Motor neuron (in vitro differentiated cells): ENCODE measurements at regions of chr6 and their contacts with region 1.

Region 1: GRCh38 chr6:129598244-129599187 is 111.5 kb downstream of the ARHGAP18 start:
- ATAC-seq: peak; percentile 64 to 87 (median 68)
- H3K4me3 ChIP-seq: no peak overlapping the region
- H3K27ac ChIP-seq: no peak overlapping the region
- H3K4me1 ChIP-seq: peaks cover 4% of the 10 kb centered on the region in 2 donors

Region 2: GRCh38 chr6:129661536-129662405 is 63.3 kb after region 1 on chr6:
- in situ Hi-C with region 1: loop called in 1 of 9 experiments (anchors 10 kb)
- ATAC-seq: peak in 7 of 8 experiments; percentile 36 to 87 (median 54)
- H3K4me3 ChIP-seq: no peak overlapping the region
- H3K27ac ChIP-seq: peak overlapping the region in 1 of 2 donors; percentile 36
- H3K4me1 ChIP-seq: peaks cover 20 to 26% of the 10 kb centered on the region in 2 donors

Region 3: DNA sequence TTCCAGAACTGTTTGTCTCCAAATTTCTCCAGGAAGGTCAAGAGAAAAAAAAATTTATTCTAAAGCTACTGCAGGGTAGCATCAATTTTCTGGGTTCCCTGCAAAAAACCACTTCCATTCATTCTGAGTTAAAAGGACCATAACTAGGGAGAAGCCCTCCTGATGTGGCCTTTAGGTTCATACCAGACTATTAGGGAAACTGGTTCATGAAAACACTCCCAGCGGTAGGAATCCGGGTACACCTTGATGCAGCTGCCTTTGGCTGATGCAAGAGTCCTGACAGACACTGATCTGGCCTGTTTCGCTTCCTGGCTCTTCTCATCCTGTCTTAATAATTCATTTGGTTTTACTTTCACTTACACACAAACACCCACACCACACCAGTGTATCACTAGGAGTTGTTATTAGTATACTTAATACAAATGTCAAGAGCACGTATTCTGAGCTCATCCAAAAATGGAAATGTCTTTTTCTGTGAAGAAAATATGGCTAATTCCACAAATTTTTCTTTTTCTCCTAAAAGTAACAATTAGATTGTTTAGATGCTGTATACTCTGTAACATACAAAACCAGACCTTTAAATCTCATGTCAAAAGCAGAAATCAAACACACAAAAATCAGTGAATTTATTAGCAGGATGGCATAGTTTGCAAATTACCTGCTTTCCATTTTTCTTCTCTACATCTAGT is 149.8 kb after region 1 on chr6:
- in situ Hi-C with region 1: loop called in 3 of 9 experiments (anchors 10 to 25 kb)
- ATAC-seq: peak in 6 of 8 experiments; percentile 38 to 93 (median 76)
- H3K4me3 ChIP-seq: no peak overlapping the region
- H3K27ac ChIP-seq: peak overlapping the region in 1 of 2 donors; percentile 30
- H3K4me1 ChIP-seq: peaks cover 4% of the 10 kb centered on the region in 2 donors

Region 4: GRCh38 chr6:130020907-130021629 is 422.6 kb after region 1 on chr6:
- in situ Hi-C with region 1: loop called in 1 of 9 experiments (anchors 10 kb)
- ATAC-seq: peak; percentile 23 to 63 (median 34)
- H3K4me3 ChIP-seq: peak overlapping the region; percentile 57 to 99 (median 88)
- H3K27ac ChIP-seq: no peak overlapping the region
- H3K4me1 ChIP-seq: no peaks in the 10 kb centered on the region